ENCODE measurements at regions of chr11 and their contacts with region 1.

Region 1: GRCh38 chr11:130653838-130654636 is 205.6 kb downstream of the ADAMTS15 start:
- DNase-seq: peak; percentile 82 to 94 (median 84)
- ATAC-seq: peak; percentile 98
- H3K4me3 ChIP-seq: no peak overlapping the region
- H3K27ac ChIP-seq: peak overlapping the region; percentile 44 to 87 (median 72)
- H3K4me1 ChIP-seq: peaks cover 2 to 61% (median 30%) of the 10 kb centered on the region in 12 donors
- H3K27me3 ChIP-seq: no peaks in the 10 kb centered on the region
- CTCF ChIP-seq: no peak
- POLR2A ChIP-seq: no peak

Region 2: DNA sequence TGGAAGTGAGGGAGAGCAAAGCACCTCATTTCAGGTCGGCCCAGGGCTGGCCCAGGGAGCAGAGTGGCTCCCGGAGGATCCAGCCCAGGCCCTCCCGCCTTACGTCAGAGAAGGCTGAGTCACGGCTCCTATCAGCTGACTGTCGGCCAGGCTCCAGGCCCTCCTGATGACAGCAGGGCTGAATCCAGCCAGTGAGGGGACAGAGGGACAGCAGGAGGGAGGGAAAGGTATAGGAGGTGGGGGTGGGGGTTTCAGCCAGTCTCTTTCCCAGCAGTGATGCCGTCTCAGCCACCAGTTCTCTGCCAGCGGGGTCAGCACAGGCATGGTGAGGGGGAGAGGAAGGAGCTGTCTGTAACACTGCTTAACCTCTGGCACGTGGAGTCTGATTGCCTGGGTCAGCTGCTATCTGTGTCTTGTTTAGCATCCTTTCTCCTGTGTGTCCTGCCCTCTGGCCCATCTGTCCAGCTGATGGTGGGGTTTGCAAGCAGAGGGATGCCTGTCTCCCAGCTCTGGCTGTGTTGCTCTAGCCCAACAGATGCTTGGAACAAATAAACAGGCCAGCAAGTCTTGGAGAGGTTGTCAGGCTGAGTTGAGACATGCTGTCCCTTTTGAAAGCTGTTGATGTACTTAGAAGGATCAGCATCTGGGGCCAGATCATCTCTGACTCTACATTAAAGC is 131.6 kb before region 1 on chr11:
- intact Hi-C with region 1: loop called in 3 of 10 experiments (anchors 5 to 10 kb)
- DNase-seq: peak; percentile 91 to 97 (median 93)
- ATAC-seq: peak; percentile 94 to 98 (median 96)
- H3K4me3 ChIP-seq: no peak overlapping the region
- H3K27ac ChIP-seq: peak overlapping the region; percentile 76 to 95 (median 84)
- H3K4me1 ChIP-seq: peaks cover 0 to 51% (median 32%) of the 10 kb centered on the region in 12 donors
- H3K27me3 ChIP-seq: no peaks in the 10 kb centered on the region
- CTCF ChIP-seq: no peak
- POLR2A ChIP-seq: peak in 1 of 2 donors; percentile 64

Region 3: GRCh38 chr11:130527636-130528297 is 126.3 kb before region 1 on chr11:
- intact Hi-C with region 1: loop called in 3 of 10 experiments (anchors 5 to 10 kb)
- DNase-seq: peak; percentile 51 to 63 (median 63)
- ATAC-seq: peak; percentile 18 to 72 (median 62)
- H3K4me3 ChIP-seq: no peak overlapping the region
- H3K27ac ChIP-seq: peak overlapping the region in 11 of 12 donors; percentile 6 to 72 (median 49)
- H3K4me1 ChIP-seq: peaks cover 10 to 46% (median 33%) of the 10 kb centered on the region in 12 donors
- H3K27me3 ChIP-seq: no peaks in the 10 kb centered on the region
- CTCF ChIP-seq: no peak
- POLR2A ChIP-seq: no peak

Region 4: DNA sequence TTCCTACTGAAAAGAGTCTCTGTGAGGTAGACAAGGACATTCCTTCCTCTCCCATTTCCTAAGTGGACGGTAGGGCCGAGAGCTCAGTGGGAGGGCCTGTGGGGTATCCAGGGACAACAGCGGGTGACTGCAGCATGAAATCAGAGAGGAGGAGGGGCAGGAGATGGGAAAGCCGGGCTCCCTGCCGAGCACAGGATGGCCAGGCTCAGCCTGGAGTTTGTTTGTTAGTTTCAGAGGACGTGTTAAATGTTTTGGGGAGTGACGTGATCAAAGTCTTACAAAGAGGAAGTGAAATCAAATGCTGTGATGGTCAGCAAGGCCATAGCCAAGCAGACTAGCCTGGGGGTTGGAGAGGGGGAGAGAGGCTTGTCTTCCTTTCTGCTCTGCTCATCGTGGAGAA is 52.9 kb before region 1 on chr11:
- intact Hi-C with region 1: no loop called
- DNase-seq: peak; percentile 67 to 89 (median 80)
- ATAC-seq: peak; percentile 90 to 98 (median 96)
- H3K4me3 ChIP-seq: no peak overlapping the region
- H3K27ac ChIP-seq: peak overlapping the region in 10 of 12 donors; percentile 28 to 62 (median 50)
- H3K4me1 ChIP-seq: peaks cover 0 to 27% (median 10%) of the 10 kb centered on the region in 12 donors
- H3K27me3 ChIP-seq: no peaks in the 10 kb centered on the region
- CTCF ChIP-seq: no peak
- POLR2A ChIP-seq: no peak

Region 5: GRCh38 chr11:130677486-130678153 is 23.6 kb after region 1 on chr11:
- intact Hi-C with region 1: loop called in 1 of 10 experiments (anchors 2 kb)
- DNase-seq: peak in 4 of 5 donors; percentile 24 to 43 (median 41)
- ATAC-seq: peak; percentile 39 to 83 (median 58)
- H3K4me3 ChIP-seq: peak overlapping the region in 1 of 12 donors; percentile 10
- H3K27ac ChIP-seq: peak overlapping the region; percentile 74 to 87 (median 79)
- H3K4me1 ChIP-seq: peaks cover 0 to 46% (median 31%) of the 10 kb centered on the region in 12 donors
- H3K27me3 ChIP-seq: no peaks in the 10 kb centered on the region
- CTCF ChIP-seq: no peak
- POLR2A ChIP-seq: no peak

Region 6: GRCh38 chr11:130726234-130727037 is 72.4 kb after region 1 on chr11:
- intact Hi-C with region 1: loop called in 1 of 10 experiments (anchors 5 kb)
- DNase-seq: peak; percentile 51 to 72 (median 64)
- ATAC-seq: peak; percentile 76 to 94 (median 90)
- H3K4me3 ChIP-seq: no peak overlapping the region
- H3K27ac ChIP-seq: peak overlapping the region in 9 of 12 donors; percentile 47 to 75 (median 60)
- H3K4me1 ChIP-seq: peaks cover 5 to 35% (median 28%) of the 10 kb centered on the region in 12 donors
- H3K27me3 ChIP-seq: no peaks in the 10 kb centered on the region
- CTCF ChIP-seq: no peak
- POLR2A ChIP-seq: no peak

Region 7: GRCh38 chr11:130827451-130828377 is 173.7 kb after region 1 on chr11:
- intact Hi-C with region 1: loop called in 3 of 10 experiments (anchors 5 to 10 kb)
- DNase-seq: peak in 4 of 5 donors; percentile 63 to 86 (median 79)
- ATAC-seq: peak; percentile 83 to 94 (median 91)
- H3K4me3 ChIP-seq: no peak overlapping the region
- H3K27ac ChIP-seq: peak overlapping the region in 10 of 12 donors; percentile 24 to 73 (median 58)
- H3K4me1 ChIP-seq: peaks cover 0 to 42% (median 25%) of the 10 kb centered on the region in 12 donors
- H3K27me3 ChIP-seq: no peaks in the 10 kb centered on the region
- CTCF ChIP-seq: peak; percentile 13 to 62 (median 48)
- POLR2A ChIP-seq: no peak

Measured in heart left ventricle (tissue), 16 donors.